Activated CD8-positive, alpha-beta T cell treated with anti-CD3 and anti-CD28 coated beads for 36 hours (primary cell): ENCODE measurements at regions of chr4 and their contacts with region 1.

Region 1: GRCh38 chr4:108370291-108371141 is 201.8 kb upstream of the LEF1 start:
- DNase-seq: peak; percentile 75
- ATAC-seq: peak; percentile 86
- H3K4me3 Mint-ChIP-seq: peak overlapping the region; percentile 74
- H3K27ac Mint-ChIP-seq: peak overlapping the region; percentile 57
- H3K4me1 Mint-ChIP-seq: peaks cover 39% of the 10 kb centered on the region
- H3K27me3 Mint-ChIP-seq: peaks cover 7% of the 10 kb centered on the region
- CTCF ChIP-seq: no peak

Region 2: GRCh38 chr4:107896158-107897045 is 474.1 kb before region 1 on chr4:
- CTCF ChIA-PET with region 1: no interaction called
- POLR2A ChIA-PET with region 1: no interaction called
- intact Hi-C with region 1: no loop called
- DNase-seq: peak; percentile 5
- ATAC-seq: peak; percentile 64
- H3K4me3 Mint-ChIP-seq: no peak overlapping the region
- H3K27ac Mint-ChIP-seq: no peak overlapping the region
- H3K4me1 Mint-ChIP-seq: no peaks in the 10 kb centered on the region
- H3K27me3 Mint-ChIP-seq: peaks cover 21% of the 10 kb centered on the region
- CTCF ChIP-seq: no peak

Region 3: GRCh38 chr4:108425988-108426387 is 55.5 kb after region 1 on chr4:
- CTCF ChIA-PET with region 1: no interaction called
- POLR2A ChIA-PET with region 1: no interaction called
- intact Hi-C with region 1: loop called (anchors 10 kb)
- DNase-seq: no peak
- ATAC-seq: peak; percentile 68
- H3K4me3 Mint-ChIP-seq: no peak overlapping the region
- H3K27ac Mint-ChIP-seq: peak overlapping the region; percentile 1
- H3K4me1 Mint-ChIP-seq: peaks cover 25% of the 10 kb centered on the region
- H3K27me3 Mint-ChIP-seq: no peaks in the 10 kb centered on the region
- CTCF ChIP-seq: no peak